ENCODE measurements at regions of chr2 and their contacts with region 1.

Region 1: DNA sequence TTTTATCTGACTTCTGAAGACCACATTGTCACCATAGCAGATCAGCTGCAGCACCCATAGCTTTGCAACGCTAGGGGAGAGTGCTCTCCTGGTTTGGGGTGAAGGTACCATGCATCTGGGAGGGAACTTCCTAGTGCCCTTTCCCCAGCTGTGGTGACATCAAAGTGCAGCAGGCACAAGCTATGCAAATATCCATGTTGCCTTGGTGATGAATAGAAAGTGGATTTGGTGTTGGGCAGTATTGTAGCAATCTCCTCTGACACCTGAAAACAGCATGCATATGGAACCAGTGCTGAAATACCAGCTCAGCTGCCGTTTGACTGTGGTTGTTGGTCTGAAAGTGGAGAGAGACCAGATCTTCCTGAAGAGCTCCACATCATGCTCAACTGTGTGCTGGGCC is 37.1 kb downstream of the BCL2L11 start:
- DNase-seq: no peak
- ATAC-seq: peak; percentile 65
- H3K4me3 Mint-ChIP-seq: peak overlapping the region; percentile 73
- H3K27ac Mint-ChIP-seq: peak overlapping the region; percentile 95
- H3K4me1 Mint-ChIP-seq: peaks cover 71% of the 10 kb centered on the region
- H3K27me3 Mint-ChIP-seq: no peaks in the 10 kb centered on the region
- CTCF ChIP-seq: no peak

Region 2: DNA sequence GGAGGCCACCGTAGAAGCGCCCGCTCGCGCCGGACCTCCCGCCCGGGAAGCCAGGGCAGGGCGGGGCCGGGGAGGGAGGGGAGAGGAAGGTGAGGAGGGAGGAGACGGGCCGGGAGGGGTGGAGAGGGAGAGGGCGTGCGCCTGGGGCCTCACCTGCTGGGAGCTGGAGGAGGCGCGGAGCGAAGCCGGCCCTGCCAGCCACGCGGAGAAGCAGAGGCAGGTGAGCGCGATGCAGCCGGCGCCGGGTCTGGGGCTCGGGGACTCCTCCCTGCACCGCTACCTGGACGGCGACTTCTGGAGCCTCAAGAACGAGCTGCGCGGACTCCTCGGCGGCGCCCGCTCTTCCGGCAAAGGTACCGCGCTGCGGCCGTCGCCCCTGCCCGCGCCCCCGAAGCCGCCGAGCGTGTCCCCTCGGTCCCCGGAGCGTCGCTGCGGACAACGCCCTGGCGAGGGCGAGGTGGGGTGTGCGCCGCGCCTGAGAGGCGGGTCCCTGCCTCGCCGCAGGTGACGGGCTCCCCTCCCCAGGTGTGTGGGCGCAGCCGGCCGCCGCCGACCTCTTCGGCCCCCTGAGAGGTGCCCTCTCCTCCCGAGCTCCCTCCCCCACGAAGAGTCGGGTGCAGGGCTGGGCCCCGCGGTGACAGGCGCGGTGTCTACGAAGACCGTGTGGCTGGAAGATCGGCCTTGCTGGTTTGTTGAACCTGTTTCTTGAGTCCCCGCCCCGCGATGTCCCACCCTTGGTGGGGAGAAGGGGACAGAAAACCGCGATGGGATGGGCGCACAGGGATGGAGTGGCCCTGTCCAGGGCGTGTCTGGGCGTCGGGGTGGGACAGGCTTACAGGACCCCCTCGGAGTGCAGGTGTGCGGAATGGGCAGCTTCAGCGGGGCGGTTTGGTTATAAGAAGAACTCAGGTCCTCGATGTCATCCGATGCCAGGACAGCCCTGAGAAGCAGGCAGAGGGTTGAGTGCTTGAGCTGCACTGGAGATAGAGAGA is 425.1 kb before region 1 on chr2 and contains the start of gene ACOXL:
- CTCF ChIA-PET with region 1: no interaction called
- POLR2A ChIA-PET with region 1: no interaction called
- intact Hi-C with region 1: no loop called
- DNase-seq: no peak
- ATAC-seq: peak; percentile 28
- H3K4me3 Mint-ChIP-seq: peak within 1 kb of the TSS; percentile 62
- H3K27ac Mint-ChIP-seq: no peak within 1 kb of the TSS
- H3K4me1 Mint-ChIP-seq: peaks cover 19% of the 10 kb centered on the region
- H3K27me3 Mint-ChIP-seq: peaks cover 66% of the 10 kb centered on the region
- CTCF ChIP-seq: no peak
- total RNA-seq, gene ACOXL: 0.20 TPM in 1 of 2 replicates, not detected in the other

Region 3: DNA sequence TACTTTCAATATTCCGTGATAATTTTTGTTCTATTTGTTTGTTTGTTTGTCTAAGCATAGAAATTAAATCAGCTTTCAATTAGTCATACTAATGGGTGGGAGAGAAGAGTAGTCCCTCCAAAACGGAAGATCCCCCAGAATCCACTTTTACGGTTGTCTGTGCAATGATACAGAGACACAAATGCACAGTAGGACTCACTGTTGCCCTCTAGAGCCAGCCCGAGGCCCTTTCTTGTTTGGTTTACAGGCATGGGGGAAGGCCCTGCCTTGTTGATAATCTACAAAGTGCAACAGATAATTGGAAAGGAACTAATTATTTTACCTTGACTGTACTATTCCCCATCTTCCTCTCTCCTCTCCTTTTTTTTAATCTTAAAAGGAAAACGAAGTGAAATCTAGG is 304.3 kb before region 1 on chr2:
- CTCF ChIA-PET with region 1: no interaction called
- POLR2A ChIA-PET with region 1: no interaction called
- intact Hi-C with region 1: loop called (anchors 1 kb)
- DNase-seq: no peak
- ATAC-seq: peak; percentile 27
- H3K4me3 Mint-ChIP-seq: no peak overlapping the region
- H3K27ac Mint-ChIP-seq: no peak overlapping the region
- H3K4me1 Mint-ChIP-seq: peaks cover 34% of the 10 kb centered on the region
- H3K27me3 Mint-ChIP-seq: no peaks in the 10 kb centered on the region
- CTCF ChIP-seq: no peak

Region 4: GRCh38 chr2:111042772-111043771 is 114.7 kb before region 1 on chr2:
- CTCF ChIA-PET with region 1: no interaction called
- POLR2A ChIA-PET with region 1: no interaction called
- intact Hi-C with region 1: no loop called
- DNase-seq: no peak
- ATAC-seq: peak; percentile 56
- H3K4me3 Mint-ChIP-seq: no peak overlapping the region
- H3K27ac Mint-ChIP-seq: no peak overlapping the region
- H3K4me1 Mint-ChIP-seq: peaks cover 19% of the 10 kb centered on the region
- H3K27me3 Mint-ChIP-seq: no peaks in the 10 kb centered on the region
- CTCF ChIP-seq: no peak

Region 5: DNA sequence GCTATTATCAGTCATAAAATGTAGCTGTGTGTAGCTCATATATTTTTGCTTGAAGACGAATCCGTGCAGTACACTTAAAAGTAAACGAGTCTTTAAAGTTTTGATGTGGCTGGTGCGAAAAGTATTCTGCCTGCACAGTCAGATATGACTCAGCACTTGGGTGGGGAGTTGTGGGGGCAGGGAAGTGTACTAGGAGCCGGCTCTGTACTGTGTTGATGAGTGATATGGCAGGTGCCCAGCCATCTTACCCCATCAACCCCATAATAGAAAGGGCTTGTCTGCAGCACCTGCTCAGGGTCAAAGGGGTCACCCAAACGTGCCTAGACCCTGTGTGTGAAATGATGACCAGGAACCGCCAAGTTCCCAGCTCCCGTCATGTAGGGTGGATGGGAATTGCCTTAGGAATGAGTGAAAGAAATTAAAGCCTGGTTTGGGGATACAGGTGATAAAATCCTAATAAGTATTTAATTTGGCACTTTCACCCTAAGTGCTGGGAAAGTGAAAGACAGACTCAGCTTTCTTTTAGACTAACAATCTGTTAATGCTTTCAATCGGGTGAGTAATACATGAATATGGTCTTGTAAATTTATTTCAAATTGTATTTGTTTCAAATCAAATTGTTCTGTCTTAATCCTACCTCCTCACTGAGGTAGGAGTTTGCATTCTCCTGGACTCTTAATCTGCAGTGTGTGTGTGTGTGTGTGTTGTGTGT is 10.9 kb after region 1 on chr2:
- CTCF ChIA-PET with region 1: interaction called, 6 read pairs
- POLR2A ChIA-PET with region 1: interaction called, 38 read pairs
- intact Hi-C with region 1: loop called (anchors 1 kb)
- DNase-seq: no peak
- ATAC-seq: peak; percentile 59
- H3K4me3 Mint-ChIP-seq: no peak overlapping the region
- H3K27ac Mint-ChIP-seq: no peak overlapping the region
- H3K4me1 Mint-ChIP-seq: peaks cover 25% of the 10 kb centered on the region
- H3K27me3 Mint-ChIP-seq: no peaks in the 10 kb centered on the region
- CTCF ChIP-seq: no peak

Region 6: DNA sequence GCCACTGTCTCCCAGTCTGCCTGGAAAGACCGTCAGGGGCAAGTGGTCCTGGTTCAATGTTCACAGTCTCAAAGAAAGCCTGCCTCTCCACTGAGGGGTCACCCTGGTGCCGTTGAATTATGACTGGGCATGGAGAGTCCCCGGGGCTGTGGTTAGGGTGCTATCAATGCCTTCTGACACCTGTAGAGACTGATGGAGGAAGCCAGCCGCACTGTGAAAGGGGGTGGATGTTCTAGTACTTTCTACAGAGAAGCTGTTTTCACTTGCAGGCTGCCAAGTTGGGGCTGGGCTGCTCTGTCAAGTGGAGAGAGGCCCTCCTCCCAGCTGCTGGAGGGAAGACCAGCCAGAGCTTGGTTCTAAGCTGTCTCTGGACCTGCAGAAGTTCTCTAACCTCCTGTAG is 43.4 kb after region 1 on chr2:
- CTCF ChIA-PET with region 1: no interaction called
- POLR2A ChIA-PET with region 1: interaction called, 11 read pairs
- intact Hi-C with region 1: no loop called
- DNase-seq: no peak
- ATAC-seq: peak; percentile 73
- H3K4me3 Mint-ChIP-seq: no peak overlapping the region
- H3K27ac Mint-ChIP-seq: no peak overlapping the region
- H3K4me1 Mint-ChIP-seq: peaks cover 44% of the 10 kb centered on the region
- H3K27me3 Mint-ChIP-seq: no peaks in the 10 kb centered on the region
- CTCF ChIP-seq: no peak

Region 7: GRCh38 chr2:111219285-111219684 is 61.5 kb after region 1 on chr2:
- CTCF ChIA-PET with region 1: interaction called, 10 read pairs
- POLR2A ChIA-PET with region 1: interaction called, 100 read pairs
- intact Hi-C with region 1: loop called (anchors 1 kb)
- DNase-seq: peak; percentile 41
- ATAC-seq: peak; percentile 70
- H3K4me3 Mint-ChIP-seq: peak overlapping the region; percentile 52
- H3K27ac Mint-ChIP-seq: peak overlapping the region; percentile 95
- H3K4me1 Mint-ChIP-seq: peaks cover 50% of the 10 kb centered on the region
- H3K27me3 Mint-ChIP-seq: no peaks in the 10 kb centered on the region
- CTCF ChIP-seq: no peak